Heart left ventricle (tissue), 16 donors: ENCODE measurements at regions of chr3 and their contacts with region 1.

Region 1: GRCh38 chr3:18559331-18559842 is 134.2 kb upstream of the SATB1 start:
- DNase-seq: peak in 1 of 5 donors; percentile 6
- ATAC-seq: peak in 3 of 4 donors; percentile 32 to 59 (median 54)
- H3K4me3 ChIP-seq: no peak overlapping the region
- H3K27ac ChIP-seq: no peak overlapping the region
- H3K4me1 ChIP-seq: peaks cover 0 to 10% (median 0%) of the 10 kb centered on the region in 12 donors
- H3K27me3 ChIP-seq: no peaks in the 10 kb centered on the region
- CTCF ChIP-seq: peak; percentile 43 to 70 (median 62)
- POLR2A ChIP-seq: no peak

Region 2: DNA sequence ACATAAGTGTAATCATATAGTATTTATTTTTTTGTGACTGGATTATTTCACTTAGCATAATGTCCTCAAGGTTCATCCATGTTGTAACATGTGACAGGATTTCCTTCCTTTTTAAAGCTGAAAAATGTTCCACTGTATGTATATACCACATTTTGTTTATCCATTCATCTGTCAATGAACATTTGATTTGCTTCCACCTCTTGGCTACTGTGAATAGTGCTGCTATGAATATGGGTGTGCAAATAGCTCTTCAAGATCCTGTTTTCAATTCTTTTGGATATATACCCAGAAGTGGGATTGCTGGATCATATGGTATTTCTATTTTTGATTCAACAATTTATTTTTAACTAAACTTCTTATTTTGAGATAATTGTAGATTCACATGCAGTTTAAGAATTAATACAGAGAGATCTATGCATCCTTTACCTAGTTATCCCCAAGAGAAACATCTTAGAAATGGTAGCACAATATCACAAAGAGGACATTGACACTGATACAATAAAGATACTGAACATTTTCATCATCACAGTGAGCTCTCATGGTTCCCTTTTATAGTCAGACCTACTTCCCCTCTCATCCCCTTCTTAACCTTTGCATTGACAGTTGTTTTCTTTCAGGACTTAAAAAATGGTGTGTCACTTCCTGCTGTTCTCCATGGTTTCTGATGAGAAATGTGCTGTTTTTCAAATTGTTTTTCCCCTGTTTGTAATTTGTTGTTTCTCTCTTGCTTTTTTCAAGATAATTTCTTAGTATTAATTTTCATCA is 224.4 kb before region 1 on chr3:
- intact Hi-C with region 1: no loop called
- DNase-seq: no peak
- ATAC-seq: no peak
- H3K4me3 ChIP-seq: no peak overlapping the region
- H3K27ac ChIP-seq: no peak overlapping the region
- H3K4me1 ChIP-seq: no peaks in the 10 kb centered on the region
- H3K27me3 ChIP-seq: no peaks in the 10 kb centered on the region
- CTCF ChIP-seq: no peak
- POLR2A ChIP-seq: no peak

Region 3: DNA sequence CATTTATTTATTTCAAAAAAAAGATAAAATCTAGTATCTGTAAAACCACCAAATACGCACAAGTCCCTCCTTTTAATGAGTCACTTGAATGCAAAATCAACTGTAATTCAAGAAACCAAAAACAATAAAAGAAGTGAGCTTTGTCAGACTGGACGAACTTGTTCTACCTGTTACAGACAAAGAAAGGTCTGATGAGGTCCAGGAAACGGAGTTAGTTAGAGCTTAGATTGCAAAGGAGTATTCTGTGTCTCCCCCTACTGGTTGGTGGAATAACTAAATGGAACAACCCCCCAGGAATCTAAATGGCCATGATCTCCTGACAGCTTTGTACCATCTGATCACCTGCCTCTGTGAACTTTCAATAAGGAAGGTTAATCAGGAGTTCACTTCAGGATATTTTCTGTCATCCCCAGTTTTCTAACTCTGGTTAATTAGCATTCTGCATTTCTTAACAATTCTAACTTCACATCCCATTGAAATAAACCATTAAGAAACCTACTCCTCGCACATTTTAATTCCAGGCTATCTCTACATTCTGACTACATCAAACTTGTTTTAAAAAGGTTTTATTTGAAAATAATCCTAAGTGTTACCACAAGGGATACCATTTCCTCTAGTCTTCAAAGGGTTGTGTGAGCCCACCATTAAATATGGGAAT is 198.8 kb after region 1 on chr3:
- intact Hi-C with region 1: loop called in 7 of 10 experiments (anchors 2 to 10 kb)
- DNase-seq: no peak
- ATAC-seq: peak in 3 of 4 donors; percentile 36 to 61 (median 53)
- H3K4me3 ChIP-seq: no peak overlapping the region
- H3K27ac ChIP-seq: no peak overlapping the region
- H3K4me1 ChIP-seq: no peaks in the 10 kb centered on the region
- H3K27me3 ChIP-seq: no peaks in the 10 kb centered on the region
- CTCF ChIP-seq: peak in 11 of 12 donors; percentile 20 to 64 (median 41)
- POLR2A ChIP-seq: no peak

Region 4: GRCh38 chr3:18766974-18767373 is 207.6 kb after region 1 on chr3:
- intact Hi-C with region 1: loop called in 1 of 10 experiments (anchors 10 kb)
- DNase-seq: no peak
- ATAC-seq: no peak
- H3K4me3 ChIP-seq: no peak overlapping the region
- H3K27ac ChIP-seq: no peak overlapping the region
- H3K4me1 ChIP-seq: no peaks in the 10 kb centered on the region
- H3K27me3 ChIP-seq: no peaks in the 10 kb centered on the region
- CTCF ChIP-seq: no peak
- POLR2A ChIP-seq: no peak

Region 5: GRCh38 chr3:18988614-18989229 is 429.3 kb after region 1 on chr3:
- intact Hi-C with region 1: loop called in 9 of 10 experiments (anchors 2 to 10 kb)
- DNase-seq: no peak
- ATAC-seq: no peak
- H3K4me3 ChIP-seq: no peak overlapping the region
- H3K27ac ChIP-seq: no peak overlapping the region
- H3K4me1 ChIP-seq: no peaks in the 10 kb centered on the region
- H3K27me3 ChIP-seq: no peaks in the 10 kb centered on the region
- CTCF ChIP-seq: peak in 11 of 12 donors; percentile 24 to 61 (median 44)
- POLR2A ChIP-seq: no peak

Region 6: DNA sequence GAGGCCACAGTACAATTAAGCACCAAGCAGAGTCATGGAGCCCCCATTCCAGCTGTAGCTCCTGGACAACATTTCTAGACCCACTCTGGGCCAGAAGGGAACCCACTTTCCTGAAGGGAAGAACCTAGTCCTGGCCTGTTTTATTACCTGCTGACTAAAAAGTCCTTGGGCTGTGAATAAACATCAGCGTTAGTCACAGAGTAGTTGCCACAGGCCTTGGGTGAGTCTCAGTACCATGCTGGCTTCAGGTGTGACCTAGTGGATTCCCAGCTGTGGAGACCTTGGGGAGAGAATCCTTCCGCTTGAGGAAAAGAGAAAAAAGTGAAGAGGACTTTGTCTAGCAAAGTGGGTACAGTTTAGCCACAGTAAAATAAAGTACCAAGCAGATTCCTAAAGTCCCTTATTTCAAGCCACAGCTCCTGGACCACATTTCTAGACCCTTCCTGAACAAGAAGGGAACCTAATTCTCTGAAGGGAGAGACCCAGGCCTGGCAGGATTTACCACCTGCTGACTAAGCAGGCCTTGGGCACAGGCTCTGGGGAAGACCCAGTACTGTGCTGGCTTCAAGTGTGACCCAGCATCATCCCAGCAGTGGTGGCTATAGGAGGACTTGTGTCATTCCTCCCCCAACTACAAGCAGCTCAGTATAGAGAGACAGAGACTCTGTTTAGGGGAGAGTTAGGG is 470.6 kb after region 1 on chr3:
- intact Hi-C with region 1: loop called in 1 of 10 experiments (anchors 2 kb)
- DNase-seq: no peak
- ATAC-seq: no peak
- H3K4me3 ChIP-seq: no peak overlapping the region
- H3K27ac ChIP-seq: no peak overlapping the region
- H3K4me1 ChIP-seq: no peaks in the 10 kb centered on the region
- H3K27me3 ChIP-seq: no peaks in the 10 kb centered on the region
- CTCF ChIP-seq: no peak
- POLR2A ChIP-seq: no peak